Mammary epithelial cell (primary cell): ENCODE measurements at regions of chr2 and their contacts with region 1.

Region 1: DNA sequence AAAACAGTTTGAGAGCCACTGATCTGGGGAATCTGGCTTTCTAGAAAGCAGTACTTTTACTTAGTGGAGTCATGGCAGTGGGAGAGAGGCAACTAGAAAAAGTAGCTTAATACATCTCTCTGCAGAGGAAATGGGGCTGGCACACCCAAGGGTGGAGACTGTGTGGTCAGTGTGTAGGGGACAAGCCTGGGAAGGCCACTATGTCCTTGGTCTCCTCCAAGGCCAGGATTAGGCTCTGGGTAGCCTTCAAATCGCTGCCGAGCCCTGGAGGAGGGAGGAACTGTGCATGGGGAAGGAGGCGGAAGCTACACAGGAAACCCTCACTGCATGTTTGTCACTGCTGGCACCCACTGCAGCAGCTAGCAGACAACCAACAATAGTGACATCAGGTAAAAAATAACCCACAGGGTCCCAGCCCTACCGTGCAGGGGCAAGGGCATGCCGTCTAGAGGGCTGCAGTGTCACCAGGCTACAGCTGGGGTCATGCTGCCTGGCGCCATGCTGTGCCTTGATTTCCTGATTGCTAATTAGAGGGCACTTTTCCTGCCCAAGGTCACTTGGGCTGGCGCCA is 34.8 kb downstream of the LBH start:
- DNase-seq: no peak
- H3K4me3 ChIP-seq: no peak overlapping the region
- H3K27ac ChIP-seq: no peak overlapping the region
- H3K4me1 ChIP-seq: peaks cover 6% of the 10 kb centered on the region
- H3K27me3 ChIP-seq: no peaks in the 10 kb centered on the region
- CTCF ChIP-seq: no peak

Region 2: GRCh38 chr2:30127016-30127893 is 138.9 kb before region 1 on chr2:
- CTCF ChIA-PET with region 1: no interaction called
- dilution Hi-C with region 1: no loop called
- in situ Hi-C with region 1: no loop called
- intact Hi-C with region 1: no loop called
- DNase-seq: peak; percentile 30
- H3K4me3 ChIP-seq: no peak overlapping the region
- H3K27ac ChIP-seq: no peak overlapping the region
- H3K4me1 ChIP-seq: peaks cover 3% of the 10 kb centered on the region
- H3K27me3 ChIP-seq: no peaks in the 10 kb centered on the region
- CTCF ChIP-seq: no peak

Region 3: GRCh38 chr2:30217644-30218337 is 48.3 kb before region 1 on chr2:
- CTCF ChIA-PET with region 1: no interaction called
- dilution Hi-C with region 1: loop called (anchors 5 kb)
- in situ Hi-C with region 1: no loop called
- intact Hi-C with region 1: no loop called
- DNase-seq: peak; percentile 31
- H3K4me3 ChIP-seq: no peak overlapping the region
- H3K27ac ChIP-seq: no peak overlapping the region
- H3K4me1 ChIP-seq: peaks cover 29% of the 10 kb centered on the region
- H3K27me3 ChIP-seq: no peaks in the 10 kb centered on the region
- CTCF ChIP-seq: no peak

Region 4: DNA sequence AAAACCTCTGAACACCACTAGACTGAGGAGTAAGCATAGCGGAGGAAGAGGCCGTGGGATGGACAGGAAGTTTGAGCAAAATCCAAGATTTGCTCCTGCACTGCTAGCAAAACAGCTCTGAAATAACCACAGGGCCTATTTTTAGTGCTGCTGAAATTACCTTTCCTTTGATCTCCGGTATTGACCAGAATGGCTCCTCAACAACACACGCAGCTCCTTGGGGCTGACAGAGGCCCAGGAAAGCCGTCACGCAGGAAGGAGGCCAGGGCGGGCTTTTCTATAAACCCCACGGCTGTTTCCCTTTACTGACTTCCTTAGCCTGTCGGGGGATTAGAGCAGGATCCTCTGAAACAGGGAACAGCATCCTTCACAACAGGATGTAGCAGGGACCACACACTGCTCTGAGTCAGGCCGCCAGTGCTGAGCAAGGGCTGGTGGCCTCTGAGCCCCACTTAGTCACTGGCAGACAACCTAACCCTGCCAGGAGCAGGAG is 100.1 kb after region 1 on chr2:
- CTCF ChIA-PET with region 1: no interaction called
- dilution Hi-C with region 1: no loop called
- in situ Hi-C with region 1: no loop called
- intact Hi-C with region 1: no loop called
- DNase-seq: no peak
- H3K4me3 ChIP-seq: no peak overlapping the region
- H3K27ac ChIP-seq: no peak overlapping the region
- H3K4me1 ChIP-seq: peaks cover 12% of the 10 kb centered on the region
- H3K27me3 ChIP-seq: no peaks in the 10 kb centered on the region
- CTCF ChIP-seq: no peak